ENCODE measurements at regions of chr5 and their contacts with region 1.

Region 1: GRCh38 chr5:115634343-115635132 is 8.7 kb upstream of the TMED7 start:
- DNase-seq: peak; percentile 80 to 93
- ATAC-seq: peak; percentile 96 to 99
- H3K4me3 ChIP-seq: 0 out of 3 replicates have a peak overlapping the region, but pooled peaks have one; percentile 7
- H3K27ac ChIP-seq: peak overlapping the region in 1 of 2 experiments; percentile 58; a peak in 2 of 6 replicates
- H3K4me1 ChIP-seq: no peaks in the 10 kb centered on the region
- CTCF ChIP-seq: peak; percentile 97
- EP300 ChIP-seq: no peak
- POLR2A ChIP-seq: no peak
- RAD21 ChIP-seq: peak; percentile 95

Region 2: GRCh38 chr5:115831163-115831768 is 196.7 kb after region 1 on chr5:
- CTCF ChIA-PET with region 1: interaction called, 22 read pairs
- POLR2A ChIA-PET with region 1: no interaction called
- DNase-seq: peak; percentile 44 to 50
- ATAC-seq: peak; percentile 71 to 86; a peak in 5 of 6 replicates
- H3K4me3 ChIP-seq: no peak overlapping the region
- H3K27ac ChIP-seq: no peak overlapping the region
- H3K4me1 ChIP-seq: 0 out of 3 replicates have a peak, but pooled peaks cover 2% of the 10 kb centered on the region
- CTCF ChIP-seq: peak; percentile 78
- EP300 ChIP-seq: no peak
- POLR2A ChIP-seq: no peak
- RAD21 ChIP-seq: peak; percentile 42 to 48; a peak in 3 of 5 replicates

Measured in A549 (cell line).